ENCODE measurements at regions of chr4 and their contacts with region 1.

Region 1: GRCh38 chr4:183840311-183840710 is 64.8 kb upstream of the STOX2 start:
- DNase-seq: peak; percentile 72
- H3K4me3 ChIP-seq: no peak overlapping the region
- H3K27ac ChIP-seq: no peak overlapping the region
- H3K27me3 ChIP-seq: no peaks in the 10 kb centered on the region
- CTCF ChIP-seq: peak; percentile 90

Region 2: GRCh38 chr4:184168406-184169019 is 328.2 kb after region 1 on chr4:
- in situ Hi-C with region 1: loop called (anchors 25 kb)
- DNase-seq: peak; percentile 36
- H3K4me3 ChIP-seq: no peak overlapping the region
- H3K27ac ChIP-seq: no peak overlapping the region
- H3K27me3 ChIP-seq: no peaks in the 10 kb centered on the region
- CTCF ChIP-seq: peak; percentile 89

Measured in brain microvascular endothelial cell (primary cell).